BJ (cell line): ENCODE measurements at regions of chr5 and their contacts with region 1.

Region 1: DNA sequence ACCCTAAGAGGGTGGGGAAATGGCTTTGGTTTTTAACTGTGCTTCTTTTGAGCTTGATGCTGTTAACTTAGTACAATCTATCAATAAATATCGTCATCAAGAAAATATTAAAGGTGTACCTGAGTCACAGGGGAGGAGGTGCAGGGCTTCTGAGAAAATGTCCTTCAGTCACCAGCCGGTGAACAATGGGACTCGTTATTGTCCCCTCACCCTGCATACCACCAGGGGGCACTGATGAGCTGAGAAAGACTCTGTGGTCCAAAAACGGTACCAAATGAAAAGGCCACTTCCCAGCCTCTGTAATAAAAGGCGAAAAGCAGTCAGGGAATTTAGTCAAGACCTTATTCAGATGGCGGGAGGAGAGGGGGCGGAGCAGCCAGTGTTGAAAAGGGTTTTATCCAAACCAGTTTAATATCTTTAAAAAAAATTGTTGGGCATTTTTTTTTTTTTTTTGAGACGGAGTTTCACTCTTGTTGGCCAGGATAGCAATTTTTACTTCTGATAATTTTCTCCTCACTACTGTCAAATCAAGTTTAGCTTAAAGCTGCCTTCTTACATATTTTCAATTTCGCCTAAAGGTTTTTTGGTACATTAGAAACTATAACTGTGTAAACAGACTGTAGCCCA is 271.9 kb upstream of the ADAMTS16 start:
- DNase-seq: no peak
- H3K4me3 ChIP-seq: no peak overlapping the region
- H3K27me3 ChIP-seq: no peaks in the 10 kb centered on the region
- CTCF ChIP-seq: peak; percentile 85

Region 2: DNA sequence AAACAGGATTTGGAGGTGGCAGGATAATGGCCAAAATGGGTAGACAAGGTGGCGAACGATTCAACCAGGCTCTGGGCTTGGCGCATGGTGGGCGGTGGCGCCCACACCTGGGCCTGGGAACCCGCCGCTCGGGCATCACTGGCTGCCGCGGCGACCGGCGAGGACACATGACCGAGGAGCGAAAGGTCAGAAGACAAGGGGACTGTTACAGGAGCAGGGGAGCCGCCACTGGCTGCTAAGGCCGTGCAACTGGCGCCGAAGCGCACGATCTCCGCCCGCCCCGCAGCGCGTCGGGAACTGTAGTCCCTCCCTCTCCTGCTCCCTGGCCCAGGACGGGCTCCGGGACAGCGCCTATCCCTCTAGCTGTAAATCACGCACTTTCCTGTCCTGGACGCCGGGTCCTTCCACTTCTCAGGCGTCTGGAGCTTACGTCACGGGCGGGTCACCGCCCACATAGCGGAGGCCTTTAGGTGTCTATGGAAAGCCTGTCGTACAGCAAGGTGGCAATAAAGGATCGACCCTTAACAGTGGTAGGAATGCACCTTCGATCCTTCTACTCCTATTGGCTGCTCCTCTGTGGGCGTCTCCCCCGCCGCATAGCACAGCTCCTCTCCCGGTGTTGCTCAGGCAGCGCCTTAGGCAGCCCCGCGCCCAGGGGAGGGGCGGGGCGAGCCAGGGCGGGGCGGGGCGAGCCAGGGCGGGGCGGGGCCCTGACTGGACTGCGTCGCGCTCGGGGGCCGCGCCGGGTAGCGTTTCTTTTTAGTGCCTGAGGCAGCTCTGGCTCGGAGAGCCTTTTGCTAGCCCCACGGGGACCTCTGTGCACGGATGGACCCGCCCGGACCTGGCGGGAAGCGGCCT is 554.0 kb after region 1 on chr5 and contains the start of gene ICE1:
- CTCF ChIA-PET with region 1: interaction called, 10 read pairs
- POLR2A ChIA-PET with region 1: no interaction called
- DNase-seq: peak; percentile 73
- H3K4me3 ChIP-seq: peak within 1 kb of the TSS; percentile 57
- H3K27me3 ChIP-seq: no peaks in the 10 kb centered on the region
- CTCF ChIP-seq: peak; percentile 11; the same call in 1 of the 2 replicates
- polyA plus RNA-seq, gene ICE1: 10.2 and 15.1 TPM in 2 replicates